Ovary (tissue), 10 donors: ENCODE measurements at regions of chr2 and their contacts with region 1.

Region 1: GRCh38 chr2:207467716-207468347 is 61.9 kb upstream of the CREB1 start:
- DNase-seq: no peak
- H3K4me3 ChIP-seq: no peak overlapping the region
- H3K27ac ChIP-seq: no peak overlapping the region
- H3K4me1 ChIP-seq: no peaks in the 10 kb centered on the region
- H3K27me3 ChIP-seq: no peaks in the 10 kb centered on the region
- CTCF ChIP-seq: no peak
- EP300 ChIP-seq: no peak
- POLR2A ChIP-seq: no peak

Region 2: DNA sequence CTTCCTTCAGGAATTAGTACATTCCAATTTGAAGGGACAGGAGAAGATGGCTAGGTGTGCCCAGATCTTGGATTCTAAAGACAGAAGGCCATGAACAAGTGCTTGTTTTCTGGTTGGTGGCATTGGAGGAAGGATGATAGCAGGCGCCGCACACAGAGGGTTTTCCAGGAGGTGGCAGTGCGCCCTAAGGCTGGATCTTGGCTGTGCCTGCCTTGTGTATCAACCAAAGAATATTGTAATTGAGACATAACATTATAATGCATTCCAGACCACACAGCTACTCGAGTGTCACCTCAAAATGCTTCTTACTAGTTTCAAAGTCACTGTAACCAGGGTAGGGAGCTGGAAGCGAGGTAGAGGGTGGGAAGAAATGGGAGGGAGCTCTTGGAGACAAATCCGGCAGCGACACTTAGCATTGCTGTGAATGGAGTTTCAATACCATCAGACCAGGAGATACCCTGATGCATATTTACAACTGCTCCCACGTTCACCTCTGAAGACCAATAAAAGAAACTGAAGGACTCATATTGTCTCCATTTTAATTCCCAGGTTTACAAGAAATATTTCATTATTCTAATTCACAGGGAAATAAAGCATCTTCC is 486.0 kb before region 1 on chr2:
- intact Hi-C with region 1: loop called in 2 of 4 experiments (anchors 5 to 10 kb)
- DNase-seq: peak; percentile 40 to 79 (median 70)
- H3K4me3 ChIP-seq: no peak overlapping the region
- H3K27ac ChIP-seq: no peak overlapping the region
- H3K4me1 ChIP-seq: no peaks in the 10 kb centered on the region
- H3K27me3 ChIP-seq: no peaks in the 10 kb centered on the region
- CTCF ChIP-seq: peak; percentile 22 to 52 (median 36)
- EP300 ChIP-seq: no peak
- POLR2A ChIP-seq: no peak

Region 3: DNA sequence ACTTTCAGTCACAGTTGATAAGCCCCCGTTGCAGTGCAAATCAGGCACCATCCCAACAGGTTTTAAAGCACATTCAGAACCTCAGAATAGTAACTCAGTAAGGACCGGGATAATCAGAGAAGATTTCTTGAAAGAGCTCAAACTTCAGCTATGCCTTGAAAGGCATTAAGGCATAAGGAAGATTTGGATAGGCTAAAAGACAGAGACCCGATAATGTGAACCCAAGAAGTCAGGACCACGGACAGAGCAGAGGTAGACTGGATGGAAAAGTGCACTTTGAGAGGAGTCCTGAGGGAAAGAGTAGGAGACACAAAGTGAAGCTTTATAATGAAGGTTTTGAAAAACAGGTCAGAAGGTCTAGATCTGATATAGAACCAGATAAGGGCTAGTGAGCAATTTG is 265.2 kb before region 1 on chr2:
- intact Hi-C with region 1: loop called in 1 of 4 experiments (anchors 10 kb)
- DNase-seq: peak in 1 of 5 donors; percentile 17
- H3K4me3 ChIP-seq: no peak overlapping the region
- H3K27ac ChIP-seq: no peak overlapping the region
- H3K4me1 ChIP-seq: no peaks in the 10 kb centered on the region
- H3K27me3 ChIP-seq: no peaks in the 10 kb centered on the region
- CTCF ChIP-seq: no peak
- EP300 ChIP-seq: no peak
- POLR2A ChIP-seq: no peak

Region 4: GRCh38 chr2:208798710-208799109 is 1330.9 kb after region 1 on chr2:
- intact Hi-C with region 1: no loop called
- DNase-seq: no peak
- H3K4me3 ChIP-seq: no peak overlapping the region
- H3K27ac ChIP-seq: no peak overlapping the region
- H3K4me1 ChIP-seq: no peaks in the 10 kb centered on the region
- H3K27me3 ChIP-seq: no peaks in the 10 kb centered on the region
- CTCF ChIP-seq: no peak
- EP300 ChIP-seq: no peak
- POLR2A ChIP-seq: no peak